ENCODE measurements at regions of chr16 and their contacts with region 1.

Region 1: DNA sequence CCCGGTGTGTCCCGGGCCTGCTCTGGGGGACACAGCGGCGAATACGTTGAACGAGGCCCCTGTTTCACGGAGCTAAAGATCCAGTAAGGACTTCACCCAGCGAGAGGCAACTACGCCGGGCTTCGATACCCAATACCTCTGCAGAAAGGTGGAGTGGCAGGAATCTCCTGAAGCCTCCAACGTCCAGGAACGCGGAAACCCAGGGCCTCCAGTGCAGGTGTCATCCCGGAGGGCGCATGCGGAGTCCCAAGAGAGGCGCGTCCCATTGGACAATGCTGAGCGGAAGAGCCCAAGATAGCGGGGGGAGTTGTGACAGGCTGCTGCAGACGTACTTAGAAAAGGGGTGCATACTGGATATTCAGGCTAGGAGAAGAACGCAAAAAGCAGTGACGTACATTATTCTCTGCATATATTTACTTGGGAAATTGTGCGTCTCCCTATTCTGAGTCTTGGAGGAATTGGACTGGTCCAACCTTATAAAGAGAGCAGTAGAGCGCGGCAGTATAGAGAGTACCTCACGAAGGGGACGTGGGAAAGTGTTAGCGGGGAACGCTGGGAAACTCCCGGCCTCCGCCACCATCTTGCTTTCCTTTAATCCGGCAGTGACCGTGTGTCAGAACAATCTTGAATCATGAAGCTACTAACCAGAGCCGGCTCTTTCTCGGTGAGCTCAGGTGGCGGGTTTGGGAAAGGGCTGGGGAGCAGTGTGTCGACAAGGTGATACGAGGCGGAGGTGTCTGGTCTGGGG is at the start of gene UQCRC2:
- DNase-seq: peak; percentile 95
- H3K4me3 Mint-ChIP-seq: peak within 1 kb of the TSS; percentile 99
- H3K27ac Mint-ChIP-seq: peak within 1 kb of the TSS; percentile 99
- H3K4me1 Mint-ChIP-seq: peaks cover 7% of the 10 kb centered on the region
- H3K27me3 Mint-ChIP-seq: no peaks in the 10 kb centered on the region
- CTCF ChIP-seq: no peak
- total RNA-seq, gene UQCRC2: 199 and 207 TPM in 2 replicates

Region 2: DNA sequence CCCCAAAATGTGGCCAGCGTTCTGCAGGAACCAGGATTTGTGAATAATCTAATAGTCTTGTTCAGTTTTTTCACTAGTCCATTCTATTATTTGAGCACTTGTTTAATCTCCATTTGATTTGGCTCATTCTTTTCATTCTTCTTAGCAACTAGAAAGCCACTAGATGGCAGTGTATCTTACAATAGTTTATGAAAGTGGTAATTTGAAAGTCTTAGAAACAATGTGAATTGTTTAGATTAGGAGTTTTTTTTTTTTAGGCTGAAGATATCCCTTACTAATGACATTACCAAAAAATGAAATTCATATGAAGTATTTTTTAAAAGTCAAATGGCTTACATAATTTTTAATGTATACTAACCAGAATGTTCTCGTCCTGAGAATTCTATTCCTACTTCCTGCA is 1153.4 kb before region 1 on chr16:
- CTCF ChIA-PET with region 1: no interaction called
- POLR2A ChIA-PET with region 1: no interaction called
- intact Hi-C with region 1: no loop called
- DNase-seq: peak; percentile 34
- H3K4me3 Mint-ChIP-seq: no peak overlapping the region
- H3K27ac Mint-ChIP-seq: no peak overlapping the region
- H3K4me1 Mint-ChIP-seq: peaks cover 6% of the 10 kb centered on the region
- H3K27me3 Mint-ChIP-seq: no peaks in the 10 kb centered on the region
- CTCF ChIP-seq: peak; percentile 55

Region 3: DNA sequence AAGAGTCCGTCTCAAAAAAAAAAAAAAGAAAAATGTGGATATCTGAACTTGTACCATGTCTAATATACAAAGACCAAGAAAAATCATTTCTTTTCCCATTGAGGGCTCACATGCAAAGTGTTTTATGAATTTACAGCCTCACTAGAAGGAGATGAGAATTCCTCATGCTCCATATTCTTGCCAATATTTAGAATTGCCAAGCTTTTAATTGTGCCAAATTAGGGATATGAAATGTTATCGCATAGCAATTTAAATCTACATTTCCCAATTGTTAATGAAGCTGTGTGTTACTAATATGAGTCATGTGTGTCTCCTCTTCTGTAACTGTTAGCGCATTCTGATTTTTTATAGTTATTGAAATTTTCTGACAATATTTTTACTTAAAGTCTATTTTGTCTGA is 611.9 kb before region 1 on chr16:
- CTCF ChIA-PET with region 1: no interaction called
- POLR2A ChIA-PET with region 1: no interaction called
- intact Hi-C with region 1: no loop called
- DNase-seq: no peak
- H3K4me3 Mint-ChIP-seq: no peak overlapping the region
- H3K27ac Mint-ChIP-seq: no peak overlapping the region
- H3K4me1 Mint-ChIP-seq: no peaks in the 10 kb centered on the region
- H3K27me3 Mint-ChIP-seq: no peaks in the 10 kb centered on the region
- CTCF ChIP-seq: no peak

Region 4: DNA sequence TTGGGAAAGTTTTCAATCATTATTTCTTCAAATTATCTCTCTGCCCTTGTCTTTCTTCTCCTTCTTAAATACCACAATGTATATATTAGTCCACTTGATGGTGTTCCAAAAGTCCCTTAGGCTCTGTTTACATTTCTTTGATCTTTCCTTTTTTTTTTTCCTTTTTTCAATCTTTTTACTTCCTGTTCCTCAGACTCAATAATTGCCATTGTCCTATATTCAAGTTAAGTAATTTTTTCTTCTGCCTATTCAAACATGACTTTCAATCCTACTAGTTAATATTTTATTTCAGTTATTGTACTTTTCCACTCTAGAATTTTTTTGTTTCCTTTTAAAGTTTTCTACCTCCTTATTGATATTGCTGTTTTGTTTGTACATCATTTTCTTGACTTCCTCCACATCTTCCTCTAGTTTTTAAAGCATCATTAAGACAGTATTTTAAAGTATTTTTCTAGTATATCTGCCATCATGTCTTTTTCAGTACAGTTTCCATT is 15.6 kb before region 1 on chr16:
- CTCF ChIA-PET with region 1: interaction called, 8 read pairs
- POLR2A ChIA-PET with region 1: interaction called, 27 read pairs
- intact Hi-C with region 1: no loop called
- DNase-seq: no peak
- H3K4me3 Mint-ChIP-seq: no peak overlapping the region
- H3K27ac Mint-ChIP-seq: no peak overlapping the region
- H3K4me1 Mint-ChIP-seq: peaks cover 7% of the 10 kb centered on the region
- H3K27me3 Mint-ChIP-seq: peaks cover 22% of the 10 kb centered on the region
- CTCF ChIP-seq: no peak

Region 5: DNA sequence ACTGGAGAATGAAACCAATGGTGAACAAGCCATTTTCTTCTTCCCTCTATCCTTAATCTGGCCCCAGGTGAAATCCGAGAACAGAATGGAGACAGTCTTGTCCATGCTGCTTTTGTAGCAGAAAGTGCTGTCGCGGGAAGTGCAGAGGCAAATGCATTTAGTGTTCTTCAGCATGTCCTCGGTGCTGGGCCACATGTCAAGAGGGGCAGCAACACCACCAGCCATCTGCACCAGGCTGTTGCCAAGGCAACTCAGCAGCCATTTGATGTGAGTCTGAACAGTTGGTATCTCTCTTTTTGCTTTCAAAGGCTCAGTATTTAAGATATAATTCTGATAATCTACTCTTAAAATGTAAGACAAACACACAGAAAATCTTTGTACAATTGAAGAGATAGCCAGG is 18.9 kb after region 1 on chr16:
- CTCF ChIA-PET with region 1: interaction called, 5 read pairs
- POLR2A ChIA-PET with region 1: interaction called, 30 read pairs
- intact Hi-C with region 1: no loop called
- DNase-seq: no peak
- H3K4me3 Mint-ChIP-seq: no peak overlapping the region
- H3K27ac Mint-ChIP-seq: peak overlapping the region; percentile 20
- H3K4me1 Mint-ChIP-seq: peaks cover 5% of the 10 kb centered on the region
- H3K27me3 Mint-ChIP-seq: no peaks in the 10 kb centered on the region
- CTCF ChIP-seq: no peak

Region 6: DNA sequence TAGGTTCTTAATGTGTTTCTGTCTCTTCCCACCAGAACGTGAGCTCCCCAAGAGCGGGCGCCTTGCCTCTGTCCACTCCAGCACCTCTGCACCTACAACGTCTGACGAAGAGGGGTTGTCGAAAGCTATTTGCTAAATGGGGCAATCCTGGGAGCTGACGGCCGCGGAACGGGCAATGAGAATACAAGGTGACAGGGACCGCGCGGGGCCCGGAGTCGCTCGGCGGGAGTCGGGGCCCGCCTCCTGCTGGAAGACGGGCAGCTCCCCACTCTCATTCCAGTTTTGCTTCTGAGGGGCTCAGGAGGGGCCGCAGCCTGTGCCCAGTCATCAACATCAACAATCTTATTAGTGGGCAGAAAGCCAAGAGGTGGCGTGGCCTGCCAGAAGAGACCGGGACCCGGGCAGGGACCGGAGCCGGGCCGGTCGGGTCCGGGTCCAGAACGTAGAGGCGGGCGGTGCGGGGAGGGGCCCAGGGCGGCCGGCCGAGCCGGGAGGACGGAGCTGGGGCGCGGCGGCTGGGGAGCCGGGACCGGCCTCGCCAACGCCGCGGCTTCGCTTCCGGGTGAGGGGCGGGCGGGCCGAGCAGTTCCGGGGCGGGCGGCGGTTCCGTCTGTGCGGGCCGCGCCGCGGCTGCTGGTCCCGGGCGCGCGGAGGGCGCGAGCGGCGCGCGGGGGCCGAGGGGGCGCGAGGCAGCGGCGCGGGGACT is 54.7 kb after region 1 on chr16 and contains the start of gene MOSMO:
- CTCF ChIA-PET with region 1: no interaction called
- POLR2A ChIA-PET with region 1: interaction called, 14 read pairs
- intact Hi-C with region 1: no loop called
- DNase-seq: peak; percentile 74
- H3K4me3 Mint-ChIP-seq: peak within 1 kb of the TSS; percentile 90
- H3K27ac Mint-ChIP-seq: peak within 1 kb of the TSS; percentile 70
- H3K4me1 Mint-ChIP-seq: peaks cover 26% of the 10 kb centered on the region
- H3K27me3 Mint-ChIP-seq: no peaks in the 10 kb centered on the region
- CTCF ChIP-seq: no peak
- total RNA-seq, gene MOSMO: 16.4 and 17.1 TPM in 2 replicates

Region 7: DNA sequence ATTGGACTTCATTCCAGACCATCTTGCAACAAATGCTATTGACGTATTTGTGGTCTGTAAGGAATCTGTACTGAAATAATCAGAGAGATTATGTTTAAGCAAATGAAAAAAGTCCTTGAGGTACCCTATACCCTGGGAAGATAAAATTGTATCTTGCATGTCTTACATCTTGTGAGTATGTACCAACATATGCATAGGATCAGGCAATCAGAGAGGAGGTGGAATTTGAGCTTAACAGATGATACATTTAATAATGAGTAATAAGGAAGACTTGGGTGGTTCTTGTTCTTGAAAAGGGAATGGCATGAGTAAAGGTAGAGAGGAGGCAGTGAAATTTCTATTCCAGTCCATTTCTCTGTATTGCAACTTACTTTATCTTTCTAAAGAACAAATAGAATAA is 65.6 kb after region 1 on chr16:
- CTCF ChIA-PET with region 1: no interaction called
- POLR2A ChIA-PET with region 1: no interaction called
- intact Hi-C with region 1: no loop called
- DNase-seq: no peak
- H3K4me3 Mint-ChIP-seq: no peak overlapping the region
- H3K27ac Mint-ChIP-seq: peak overlapping the region; percentile 24
- H3K4me1 Mint-ChIP-seq: peaks cover 25% of the 10 kb centered on the region
- H3K27me3 Mint-ChIP-seq: no peaks in the 10 kb centered on the region
- CTCF ChIP-seq: no peak

Region 8: GRCh38 chr16:22165508-22166285 is 212.7 kb after region 1 on chr16:
- CTCF ChIA-PET with region 1: no interaction called
- POLR2A ChIA-PET with region 1: no interaction called
- intact Hi-C with region 1: no loop called
- DNase-seq: no peak
- H3K4me3 Mint-ChIP-seq: no peak overlapping the region
- H3K27ac Mint-ChIP-seq: no peak overlapping the region
- H3K4me1 Mint-ChIP-seq: no peaks in the 10 kb centered on the region
- H3K27me3 Mint-ChIP-seq: peaks cover 15% of the 10 kb centered on the region
- CTCF ChIP-seq: no peak

Measured in MCF 10A (cell line).